Aorta (tissue), 5 donors: ENCODE measurements at regions of chr9 and their contacts with region 1.

Region 1: GRCh38 chr9:20242510-20243189 is 379.6 kb downstream of the MLLT3 start:
- DNase-seq: no peak
- ATAC-seq: no peak
- H3K4me3 ChIP-seq: no peak overlapping the region
- H3K27ac ChIP-seq: no peak overlapping the region
- H3K4me1 ChIP-seq: no peaks in the 10 kb centered on the region
- H3K27me3 ChIP-seq: peaks cover 0 to 3% of the 10 kb centered on the region in 2 donors

Region 2: GRCh38 chr9:20084125-20084524 is 158.5 kb before region 1 on chr9:
- intact Hi-C with region 1: no loop called
- DNase-seq: no peak
- ATAC-seq: no peak
- H3K4me3 ChIP-seq: no peak overlapping the region
- H3K27ac ChIP-seq: no peak overlapping the region
- H3K4me1 ChIP-seq: no peaks in the 10 kb centered on the region
- H3K27me3 ChIP-seq: peaks cover 0 to 1% of the 10 kb centered on the region in 2 donors

Region 3: GRCh38 chr9:20189871-20190270 is 52.8 kb before region 1 on chr9:
- intact Hi-C with region 1: loop called in 1 of 2 experiments (anchors 10 kb)
- DNase-seq: no peak
- ATAC-seq: no peak
- H3K4me3 ChIP-seq: no peak overlapping the region
- H3K27ac ChIP-seq: no peak overlapping the region
- H3K4me1 ChIP-seq: no peaks in the 10 kb centered on the region
- H3K27me3 ChIP-seq: peaks cover 0 to 2% of the 10 kb centered on the region in 2 donors